ENCODE measurements at regions of chr16 and their contacts with region 1.

Region 1: DNA sequence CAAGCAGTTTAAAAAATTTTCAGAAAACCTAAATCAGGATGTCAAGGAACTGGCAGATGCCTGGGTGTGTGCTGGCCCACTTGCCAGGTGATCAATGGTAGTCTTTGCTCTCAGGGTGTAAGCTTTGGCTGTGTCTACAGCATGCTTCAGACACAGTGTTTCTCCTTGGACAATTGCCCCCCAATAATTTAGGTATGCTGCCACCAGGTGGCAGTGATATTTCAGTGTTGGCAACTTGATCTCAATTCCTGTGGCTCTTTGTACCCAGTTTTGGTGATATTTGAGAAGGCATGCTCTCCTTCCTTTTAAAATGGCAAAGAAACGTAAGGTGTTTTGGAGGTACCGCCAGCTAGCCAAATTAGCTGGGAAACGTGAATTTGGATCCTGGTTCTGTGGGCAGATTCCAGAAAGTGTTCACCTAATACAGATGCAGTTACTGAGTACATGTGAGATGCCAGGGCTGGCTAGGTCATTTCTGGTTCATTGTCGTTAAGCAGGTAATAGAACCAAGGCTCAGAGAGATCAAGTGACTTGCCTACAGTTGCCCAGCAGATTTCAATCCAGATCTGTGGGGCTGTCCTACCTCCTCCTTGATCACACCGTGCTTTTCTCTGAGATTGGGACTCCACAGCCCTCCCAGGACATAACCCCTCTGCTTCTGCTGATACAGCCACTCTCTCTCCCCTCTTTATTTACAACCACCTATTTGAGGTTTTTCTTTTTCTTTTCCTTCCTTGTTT is 155.6 kb upstream of the PLCG2 start:
- DNase-seq: peak; percentile 59
- H3K4me3 ChIP-seq: no peak overlapping the region
- H3K27ac ChIP-seq: no peak overlapping the region
- H3K4me1 ChIP-seq: peaks cover 0 to 11% of the 10 kb centered on the region in 2 experiments; a peak in 1 of 4 replicates
- H3K27me3 ChIP-seq: no peaks in the 10 kb centered on the region
- CTCF ChIP-seq: peak; percentile 74
- EP300 ChIP-seq: no peak
- RAD21 ChIP-seq: peak; percentile 78

Region 2: GRCh38 chr16:81696961-81697615 is 73.6 kb after region 1 on chr16:
- CTCF ChIA-PET with region 1: interaction called, 14 read pairs
- POLR2A ChIA-PET with region 1: no interaction called
- DNase-seq: peak; percentile 61
- H3K4me3 ChIP-seq: no peak overlapping the region
- H3K27ac ChIP-seq: no peak overlapping the region
- H3K4me1 ChIP-seq: peaks cover 0 to 8% of the 10 kb centered on the region in 2 experiments; a peak in 2 of 4 replicates
- H3K27me3 ChIP-seq: no peaks in the 10 kb centered on the region
- CTCF ChIP-seq: peak; percentile 60
- EP300 ChIP-seq: no peak
- RAD21 ChIP-seq: peak; percentile 67

Region 3: GRCh38 chr16:81723098-81723723 is 99.7 kb after region 1 on chr16:
- CTCF ChIA-PET with region 1: interaction called, 16 read pairs
- POLR2A ChIA-PET with region 1: no interaction called
- DNase-seq: peak; percentile 83
- H3K4me3 ChIP-seq: peak overlapping the region in 1 of 2 experiments; percentile 4; a peak in 1 of 4 replicates
- H3K27ac ChIP-seq: no peak overlapping the region
- H3K4me1 ChIP-seq: no peaks in the 10 kb centered on the region
- H3K27me3 ChIP-seq: no peaks in the 10 kb centered on the region; the same call in 1 of the 2 replicates
- CTCF ChIP-seq: peak; percentile 75
- EP300 ChIP-seq: no peak
- RAD21 ChIP-seq: peak; percentile 96

Region 4: DNA sequence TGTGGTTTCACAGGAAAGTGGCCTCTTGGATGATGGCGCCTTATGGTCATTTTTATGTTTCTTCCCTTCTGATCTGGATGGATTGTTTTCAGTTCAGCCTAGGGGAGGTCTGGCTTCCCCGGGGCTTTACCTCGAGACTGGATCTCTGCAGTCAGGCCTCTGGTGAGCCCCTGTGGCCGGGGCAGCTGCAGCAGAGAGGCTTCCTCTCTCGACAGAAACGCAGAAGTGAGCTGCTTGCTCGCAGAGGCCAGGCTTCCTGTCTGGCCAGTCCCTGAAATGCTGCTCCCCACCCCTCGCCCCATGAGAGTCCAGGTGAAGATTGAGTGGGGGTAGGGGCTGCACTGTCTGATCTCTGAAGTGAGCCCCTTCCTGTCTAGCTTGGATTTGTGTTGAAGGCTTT is 199.6 kb after region 1 on chr16:
- CTCF ChIA-PET with region 1: no interaction called
- POLR2A ChIA-PET with region 1: no interaction called
- DNase-seq: no peak
- H3K4me3 ChIP-seq: no peak overlapping the region
- H3K27ac ChIP-seq: no peak overlapping the region
- H3K4me1 ChIP-seq: no peaks in the 10 kb centered on the region
- H3K27me3 ChIP-seq: no peaks in the 10 kb centered on the region
- CTCF ChIP-seq: no peak
- EP300 ChIP-seq: no peak
- RAD21 ChIP-seq: no peak

Measured in SK-N-SH (cell line).